ENCODE measurements at regions of chr22 and their contacts with region 1.

Region 1: GRCh38 chr22:39496131-39496838 is 5.8 kb upstream of the MIEF1 start:
- DNase-seq: peak; percentile 74
- H3K4me3 Mint-ChIP-seq: no peak overlapping the region
- H3K27ac Mint-ChIP-seq: no peak overlapping the region
- H3K4me1 Mint-ChIP-seq: peaks cover 3% of the 10 kb centered on the region
- H3K27me3 Mint-ChIP-seq: no peaks in the 10 kb centered on the region

Region 2: GRCh38 chr22:39428578-39429071 is 67.7 kb before region 1 on chr22:
- CTCF ChIA-PET with region 1: no interaction called
- intact Hi-C with region 1: no loop called
- DNase-seq: no peak
- H3K4me3 Mint-ChIP-seq: no peak overlapping the region
- H3K27ac Mint-ChIP-seq: no peak overlapping the region
- H3K4me1 Mint-ChIP-seq: no peaks in the 10 kb centered on the region
- H3K27me3 Mint-ChIP-seq: no peaks in the 10 kb centered on the region

Region 3: GRCh38 chr22:39456262-39457197 is 39.8 kb before region 1 on chr22 and contains the start of gene MGAT3:
- CTCF ChIA-PET with region 1: no interaction called
- intact Hi-C with region 1: no loop called
- DNase-seq: no peak
- H3K4me3 Mint-ChIP-seq: peak within 1 kb of the TSS; percentile 53
- H3K27ac Mint-ChIP-seq: no peak within 1 kb of the TSS
- H3K4me1 Mint-ChIP-seq: peaks cover 11% of the 10 kb centered on the region
- H3K27me3 Mint-ChIP-seq: peaks cover 41% of the 10 kb centered on the region
- total RNA-seq, gene MGAT3: 0.40 to 0.62 TPM

Region 4: GRCh38 chr22:39482768-39483167 is 13.5 kb before region 1 on chr22:
- CTCF ChIA-PET with region 1: interaction called, 10 read pairs
- intact Hi-C with region 1: no loop called
- DNase-seq: no peak
- H3K4me3 Mint-ChIP-seq: no peak overlapping the region
- H3K27ac Mint-ChIP-seq: no peak overlapping the region
- H3K4me1 Mint-ChIP-seq: no peaks in the 10 kb centered on the region
- H3K27me3 Mint-ChIP-seq: no peaks in the 10 kb centered on the region

Region 5: DNA sequence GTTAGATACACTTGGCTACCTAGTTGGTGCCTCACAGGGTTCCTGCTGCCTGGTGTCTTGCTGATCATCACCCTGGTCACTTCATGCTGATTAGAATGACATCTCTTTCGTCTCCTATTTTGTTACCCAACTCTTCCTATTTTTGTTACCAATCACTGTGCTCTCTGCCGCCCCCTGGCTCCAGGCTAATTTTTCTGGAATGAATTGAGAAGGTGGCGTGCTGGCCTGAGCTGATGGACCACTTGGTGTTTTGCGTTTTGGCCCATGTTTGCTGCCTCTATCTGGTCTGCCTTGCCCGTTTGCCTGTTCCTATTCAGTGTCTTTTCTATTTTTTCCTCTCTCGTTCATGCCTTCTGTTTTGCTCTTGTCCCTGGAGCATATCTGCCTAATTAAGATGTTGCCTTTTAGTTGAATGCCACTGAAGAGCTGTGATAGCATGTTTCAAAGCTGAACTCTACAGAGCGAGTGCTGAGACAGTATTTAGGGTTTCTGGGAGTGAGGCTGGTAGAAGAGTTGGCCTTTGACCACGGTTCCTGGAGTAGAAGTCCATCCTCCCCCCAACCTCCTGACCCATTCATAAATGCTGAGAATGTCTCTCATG is 18.2 kb after region 1 on chr22:
- CTCF ChIA-PET with region 1: interaction called, 44 read pairs
- intact Hi-C with region 1: no loop called
- DNase-seq: peak; percentile 76
- H3K4me3 Mint-ChIP-seq: no peak overlapping the region
- H3K27ac Mint-ChIP-seq: peak overlapping the region; percentile 16
- H3K4me1 Mint-ChIP-seq: peaks cover 46% of the 10 kb centered on the region
- H3K27me3 Mint-ChIP-seq: no peaks in the 10 kb centered on the region

Region 6: GRCh38 chr22:40107851-40108378 is 611.6 kb after region 1 on chr22:
- CTCF ChIA-PET with region 1: no interaction called
- intact Hi-C with region 1: no loop called
- DNase-seq: peak; percentile 55
- H3K4me3 Mint-ChIP-seq: peak overlapping the region; percentile 66
- H3K27ac Mint-ChIP-seq: peak overlapping the region; percentile 87
- H3K4me1 Mint-ChIP-seq: peaks cover 81% of the 10 kb centered on the region
- H3K27me3 Mint-ChIP-seq: no peaks in the 10 kb centered on the region

Measured in activated naive CD4-positive, alpha-beta T cell treated with anti-CD3 and anti-CD28 coated beads for 36 hours (primary cell).